ENCODE measurements at regions of chr18 and their contacts with region 1.

Region 1: GRCh38 chr18:23619388-23619881 is 33.1 kb upstream of the NPC1 start:
- DNase-seq: peak; percentile 15
- H3K4me3 Mint-ChIP-seq: peak overlapping the region; percentile 48
- H3K27ac Mint-ChIP-seq: no peak overlapping the region
- H3K4me1 Mint-ChIP-seq: peaks cover 7% of the 10 kb centered on the region
- H3K27me3 Mint-ChIP-seq: peaks cover 30% of the 10 kb centered on the region

Region 2: GRCh38 chr18:23812546-23813440 is 193.4 kb after region 1 on chr18:
- CTCF ChIA-PET with region 1: interaction called, 17 read pairs
- POLR2A ChIA-PET with region 1: no interaction called
- intact Hi-C with region 1: loop called (anchors 1 kb)
- DNase-seq: no peak
- H3K4me3 Mint-ChIP-seq: no peak overlapping the region
- H3K27ac Mint-ChIP-seq: no peak overlapping the region
- H3K4me1 Mint-ChIP-seq: peaks cover 6% of the 10 kb centered on the region
- H3K27me3 Mint-ChIP-seq: peaks cover 5% of the 10 kb centered on the region

Region 3: DNA sequence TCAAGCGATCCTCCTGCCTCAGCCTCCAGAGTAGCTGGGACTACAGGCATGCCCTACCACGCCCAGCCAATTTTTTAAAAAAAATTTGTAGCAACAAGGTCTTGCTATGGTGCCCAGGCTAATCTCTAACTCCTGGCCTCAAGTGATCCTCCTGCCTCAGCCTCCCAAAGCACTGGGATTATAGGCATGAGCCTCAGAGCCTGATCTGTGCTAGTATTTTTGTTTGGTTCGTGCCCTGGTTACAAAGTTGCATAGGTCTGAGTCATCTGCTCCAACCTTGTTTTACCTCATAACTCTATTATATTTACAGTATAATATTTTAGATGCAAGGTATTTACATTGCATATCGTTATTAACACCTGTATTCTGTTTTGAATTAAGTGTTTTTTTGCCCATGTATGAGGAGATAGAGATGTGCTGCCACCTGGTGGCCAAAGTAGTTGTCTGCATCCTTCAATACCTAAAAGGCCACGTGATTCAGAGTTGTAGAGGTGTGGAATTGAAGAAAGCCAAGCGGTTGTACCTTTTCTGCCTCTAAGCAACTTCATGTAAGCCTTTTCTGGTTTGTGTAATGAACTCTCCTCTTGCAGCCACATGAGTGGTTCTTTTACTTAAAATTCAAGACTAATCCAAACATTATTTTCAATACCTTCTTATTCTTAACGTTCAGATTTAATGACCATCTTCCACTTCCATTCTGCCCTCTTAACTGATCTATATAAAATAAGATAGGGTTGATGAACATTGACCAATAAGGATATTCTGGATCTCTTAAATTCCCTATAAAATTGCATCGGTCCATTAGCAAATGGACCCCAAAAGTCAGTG is 499.5 kb after region 1 on chr18:
- CTCF ChIA-PET with region 1: interaction called, 10 read pairs
- POLR2A ChIA-PET with region 1: no interaction called
- intact Hi-C with region 1: loop called (anchors 2 kb)
- DNase-seq: peak; percentile 85
- H3K4me3 Mint-ChIP-seq: no peak overlapping the region
- H3K27ac Mint-ChIP-seq: peak overlapping the region; percentile 49
- H3K4me1 Mint-ChIP-seq: peaks cover 26% of the 10 kb centered on the region
- H3K27me3 Mint-ChIP-seq: no peaks in the 10 kb centered on the region

Measured in activated CD4-positive, alpha-beta memory T cell treated with anti-CD3 and anti-CD28 coated beads for 36 hours (primary cell).